ENCODE measurements at regions of chr6 and their contacts with region 1.

Region 1: DNA sequence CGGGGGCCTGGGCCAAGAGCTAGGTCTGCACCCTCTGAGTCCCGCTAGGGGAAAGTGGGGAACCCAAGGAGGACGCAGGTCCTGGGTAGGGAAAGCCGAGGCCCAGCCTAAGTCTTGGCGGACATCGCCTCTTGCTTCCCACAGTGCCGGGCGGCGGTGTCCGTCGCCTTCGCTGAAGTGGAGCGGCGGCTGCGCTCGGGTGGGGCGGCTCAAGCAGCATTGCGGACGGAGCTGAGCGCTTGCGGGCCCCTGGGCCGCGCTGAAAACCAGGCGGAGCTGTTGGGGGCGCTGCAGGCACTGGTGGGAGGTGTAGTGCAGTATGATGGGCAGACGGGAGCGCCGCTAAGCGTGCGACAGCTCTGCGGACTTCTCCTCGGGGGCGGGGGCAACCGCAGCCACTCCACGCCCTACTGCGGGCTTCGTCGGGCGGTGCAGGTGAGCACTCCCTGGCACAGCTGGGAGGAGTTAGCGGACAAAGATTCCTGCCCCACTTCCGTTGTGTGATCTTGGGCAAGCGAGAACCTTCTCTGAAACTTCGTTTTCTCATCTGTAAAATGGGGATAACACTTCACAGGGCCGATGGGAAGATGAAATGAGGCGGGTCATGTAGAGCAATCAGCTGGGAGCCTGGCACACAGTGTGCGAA is 4.2 kb downstream of the PRSS16 start:
- DNase-seq: peak; percentile 88
- H3K4me3 Mint-ChIP-seq: peak overlapping the region; percentile 79
- H3K27ac Mint-ChIP-seq: peak overlapping the region; percentile 28
- H3K4me1 Mint-ChIP-seq: peaks cover 11% of the 10 kb centered on the region
- H3K27me3 Mint-ChIP-seq: peaks cover 45% of the 10 kb centered on the region

Region 2: GRCh38 chr6:27188885-27189418 is 62.8 kb before region 1 on chr6:
- CTCF ChIA-PET with region 1: no interaction called
- POLR2A ChIA-PET with region 1: no interaction called
- intact Hi-C with region 1: loop called (anchors 1 kb)
- DNase-seq: peak; percentile 61
- H3K4me3 Mint-ChIP-seq: peak overlapping the region; percentile 78
- H3K27ac Mint-ChIP-seq: peak overlapping the region; percentile 8
- H3K4me1 Mint-ChIP-seq: peaks cover 6% of the 10 kb centered on the region
- H3K27me3 Mint-ChIP-seq: no peaks in the 10 kb centered on the region

Region 3: GRCh38 chr6:27230758-27231111 is 21.0 kb before region 1 on chr6:
- CTCF ChIA-PET with region 1: no interaction called
- POLR2A ChIA-PET with region 1: no interaction called
- intact Hi-C with region 1: no loop called
- DNase-seq: no peak
- H3K4me3 Mint-ChIP-seq: no peak overlapping the region
- H3K27ac Mint-ChIP-seq: no peak overlapping the region
- H3K4me1 Mint-ChIP-seq: peaks cover 9% of the 10 kb centered on the region
- H3K27me3 Mint-ChIP-seq: peaks cover 52% of the 10 kb centered on the region

Region 4: GRCh38 chr6:27295301-27296081 is 43.8 kb after region 1 on chr6:
- CTCF ChIA-PET with region 1: no interaction called
- POLR2A ChIA-PET with region 1: no interaction called
- intact Hi-C with region 1: no loop called
- DNase-seq: no peak
- H3K4me3 Mint-ChIP-seq: peak overlapping the region; percentile 1
- H3K27ac Mint-ChIP-seq: peak overlapping the region; percentile 9
- H3K4me1 Mint-ChIP-seq: peaks cover 5% of the 10 kb centered on the region
- H3K27me3 Mint-ChIP-seq: peaks cover 75% of the 10 kb centered on the region

Region 5: GRCh38 chr6:27374824-27375612 is 123.3 kb after region 1 on chr6:
- CTCF ChIA-PET with region 1: no interaction called
- POLR2A ChIA-PET with region 1: no interaction called
- intact Hi-C with region 1: loop called (anchors 10 kb)
- DNase-seq: peak; percentile 86
- H3K4me3 Mint-ChIP-seq: peak overlapping the region; percentile 81
- H3K27ac Mint-ChIP-seq: peak overlapping the region; percentile 59
- H3K4me1 Mint-ChIP-seq: peaks cover 19% of the 10 kb centered on the region
- H3K27me3 Mint-ChIP-seq: no peaks in the 10 kb centered on the region

Region 6: GRCh38 chr6:28081486-28081751 is 829.7 kb after region 1 on chr6:
- CTCF ChIA-PET with region 1: no interaction called
- POLR2A ChIA-PET with region 1: no interaction called
- intact Hi-C with region 1: no loop called
- DNase-seq: peak; percentile 25
- H3K4me3 Mint-ChIP-seq: peak overlapping the region; percentile 96
- H3K27ac Mint-ChIP-seq: peak overlapping the region; percentile 97
- H3K4me1 Mint-ChIP-seq: peaks cover 20% of the 10 kb centered on the region
- H3K27me3 Mint-ChIP-seq: no peaks in the 10 kb centered on the region

Measured in activated CD4-positive, alpha-beta memory T cell treated with anti-CD3 and anti-CD28 coated beads for 36 hours (primary cell).